OCI-LY7 (cell line): ENCODE measurements at regions of chr5 and their contacts with region 1.

Region 1: DNA sequence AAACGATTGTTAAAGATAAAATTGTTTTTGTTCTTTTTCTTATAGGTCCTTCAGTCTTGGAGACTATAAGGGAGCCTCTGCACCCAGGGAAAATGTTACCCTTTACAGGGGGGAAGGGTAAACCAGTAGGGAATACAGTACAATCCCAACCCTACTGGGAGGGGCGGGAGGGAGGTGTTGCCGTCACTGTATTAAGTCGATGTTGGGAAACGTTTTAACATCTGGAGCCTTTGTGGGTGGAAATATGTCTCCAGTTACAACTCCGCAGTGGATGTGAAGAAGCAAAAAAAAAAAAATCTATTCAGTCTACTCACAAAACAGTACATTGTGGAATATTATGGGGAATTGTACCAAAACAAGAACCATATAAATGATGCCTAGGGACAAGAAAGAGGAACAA is 47.2 kb upstream of the FCHO2 start:
- DNase-seq: no peak
- H3K4me3 ChIP-seq: no peak overlapping the region
- H3K27ac ChIP-seq: no peak overlapping the region
- H3K4me1 ChIP-seq: no peaks in the 10 kb centered on the region
- CTCF ChIP-seq: no peak

Region 2: DNA sequence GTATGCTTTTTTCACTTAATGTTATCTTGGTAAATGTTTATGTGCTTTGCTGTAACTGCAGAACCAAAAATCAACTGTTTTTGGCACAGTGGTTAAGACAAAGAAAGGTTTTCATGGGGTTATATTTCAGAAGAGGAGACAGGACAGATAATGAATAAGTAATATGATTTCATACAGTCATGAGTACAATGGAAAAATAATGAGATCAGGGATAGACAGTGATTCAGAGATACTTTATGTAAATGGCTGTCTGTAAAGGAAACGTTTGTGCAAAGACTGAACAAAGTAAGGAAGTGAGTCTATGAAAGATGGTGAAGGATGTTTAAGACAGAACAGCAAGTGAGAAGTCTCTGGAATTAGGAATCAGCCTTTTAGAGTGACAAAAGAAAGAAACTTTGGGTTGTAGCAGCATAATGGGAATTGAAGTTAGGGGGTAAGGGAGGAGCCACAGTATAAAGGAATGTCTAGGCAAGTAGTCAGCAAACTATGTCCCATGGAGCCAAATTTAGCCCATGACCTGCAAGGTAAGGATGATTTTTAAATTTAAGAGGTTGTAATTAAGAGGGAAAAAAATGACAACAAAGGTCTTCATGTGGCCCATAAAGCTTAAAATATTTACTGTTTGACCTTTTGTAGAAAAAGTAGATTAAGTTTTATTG is 37.2 kb before region 1 on chr5:
- CTCF ChIA-PET with region 1: no interaction called
- POLR2A ChIA-PET with region 1: no interaction called
- intact Hi-C with region 1: loop called (anchors 5 kb)
- DNase-seq: no peak
- H3K4me3 ChIP-seq: no peak overlapping the region
- H3K27ac ChIP-seq: no peak overlapping the region
- H3K4me1 ChIP-seq: no peaks in the 10 kb centered on the region
- CTCF ChIP-seq: no peak

Region 3: DNA sequence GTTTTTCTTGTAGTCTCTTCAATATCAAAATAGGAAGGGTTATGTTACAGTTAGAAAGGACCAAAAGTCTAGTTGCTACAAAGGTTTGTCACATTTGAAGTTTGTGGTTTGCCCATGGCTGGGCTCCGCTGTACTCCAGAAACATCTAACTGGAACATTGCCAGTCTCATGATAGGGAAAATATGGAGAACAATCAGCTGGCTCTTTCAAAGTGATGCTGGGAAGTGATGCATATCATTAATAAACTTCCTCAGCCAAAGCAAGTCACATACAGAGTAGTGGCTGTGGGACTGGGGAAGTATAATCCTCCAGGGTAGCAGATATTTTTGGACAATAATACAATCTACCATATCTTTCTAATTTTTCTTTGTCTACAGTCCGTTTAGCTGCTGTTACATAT is 598.4 kb after region 1 on chr5:
- CTCF ChIA-PET with region 1: no interaction called
- POLR2A ChIA-PET with region 1: no interaction called
- intact Hi-C with region 1: no loop called
- DNase-seq: no peak
- H3K4me3 ChIP-seq: no peak overlapping the region
- H3K27ac ChIP-seq: no peak overlapping the region
- H3K4me1 ChIP-seq: no peaks in the 10 kb centered on the region
- CTCF ChIP-seq: no peak